ENCODE measurements at regions of chr2 and their contacts with region 1.

Region 1: DNA sequence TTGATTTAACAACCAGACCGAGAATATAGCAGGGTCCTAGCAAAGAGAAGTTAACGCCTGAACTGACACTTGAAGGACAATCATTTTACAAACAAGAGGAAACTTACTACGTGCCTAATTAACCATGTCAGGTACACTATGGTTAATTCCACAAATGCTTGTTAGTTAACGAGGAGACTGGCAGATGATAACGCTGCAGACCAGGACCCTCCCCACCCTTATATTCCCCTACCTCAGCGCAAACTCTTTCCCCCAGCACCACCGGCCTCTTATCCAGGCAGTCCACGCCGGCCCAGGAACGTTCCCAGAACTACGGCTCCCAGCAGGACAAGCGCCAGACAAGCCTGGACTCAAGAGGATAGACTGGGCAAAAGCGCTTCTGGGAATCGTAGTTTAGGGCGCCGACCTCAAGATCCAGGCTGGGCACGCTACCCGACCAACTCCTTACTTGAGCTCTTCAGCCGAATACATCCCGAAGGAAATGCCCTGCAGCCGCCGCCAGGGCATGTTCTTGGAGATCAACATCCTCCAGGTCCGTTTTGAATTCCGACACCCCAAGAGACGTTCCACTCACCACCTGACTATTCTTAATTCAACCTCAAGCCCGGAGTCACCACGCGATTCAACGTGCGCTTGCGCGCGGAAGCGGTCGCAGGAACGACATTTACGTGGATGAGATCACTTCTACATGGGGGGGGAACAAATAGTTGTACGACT is at the start of gene POLR1A:
- DNase-seq: peak; percentile 86 to 99 (median 90)

Region 2: GRCh38 chr2:86195055-86195807 is 89.8 kb after region 1 on chr2 and contains the start of gene IMMT:
- intact Hi-C with region 1: loop called (anchors 10 kb)
- DNase-seq: peak; percentile 91 to 100 (median 96)